Activated CD4-positive, alpha-beta memory T cell treated with anti-CD3 and anti-CD28 coated beads for 36 hours (primary cell): ENCODE measurements at regions of chr12 and their contacts with region 1.

Region 1: DNA sequence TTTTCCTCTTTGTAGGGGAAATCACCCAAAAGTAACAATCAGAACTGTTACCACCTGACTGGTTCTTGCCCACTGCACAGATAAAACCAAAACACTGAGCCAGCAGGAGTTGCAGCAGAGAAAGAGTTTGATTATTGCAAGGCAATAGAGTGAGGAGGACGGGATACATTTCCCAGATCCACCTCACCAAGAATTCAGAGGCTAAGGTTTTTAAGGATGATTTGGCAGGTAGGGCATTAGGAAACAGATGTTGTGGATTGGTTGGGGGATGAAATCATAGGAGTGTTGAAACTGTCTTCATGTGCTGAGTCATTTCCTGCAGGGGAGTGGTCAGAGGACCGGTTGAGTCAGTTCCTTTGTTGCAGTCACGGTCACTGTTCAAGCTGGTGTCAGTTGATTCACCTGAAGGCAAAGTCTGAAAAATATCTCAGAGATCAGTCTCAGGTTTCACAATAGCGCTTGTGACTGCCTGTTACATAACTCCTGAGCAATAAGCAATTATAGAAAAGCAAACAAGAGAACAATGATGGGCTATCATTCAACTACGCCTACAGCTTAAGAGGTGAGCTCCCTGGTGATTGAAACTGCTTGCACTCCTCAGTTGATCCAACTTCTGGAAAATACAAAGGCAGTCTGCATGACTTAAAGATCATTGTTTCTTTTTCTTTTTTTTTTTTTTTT is 20.3 kb upstream of the AMN1 start:
- DNase-seq: peak; percentile 87
- H3K4me3 Mint-ChIP-seq: no peak overlapping the region
- H3K27ac Mint-ChIP-seq: peak overlapping the region; percentile 63
- H3K4me1 Mint-ChIP-seq: peaks cover 57% of the 10 kb centered on the region
- H3K27me3 Mint-ChIP-seq: no peaks in the 10 kb centered on the region

Region 2: DNA sequence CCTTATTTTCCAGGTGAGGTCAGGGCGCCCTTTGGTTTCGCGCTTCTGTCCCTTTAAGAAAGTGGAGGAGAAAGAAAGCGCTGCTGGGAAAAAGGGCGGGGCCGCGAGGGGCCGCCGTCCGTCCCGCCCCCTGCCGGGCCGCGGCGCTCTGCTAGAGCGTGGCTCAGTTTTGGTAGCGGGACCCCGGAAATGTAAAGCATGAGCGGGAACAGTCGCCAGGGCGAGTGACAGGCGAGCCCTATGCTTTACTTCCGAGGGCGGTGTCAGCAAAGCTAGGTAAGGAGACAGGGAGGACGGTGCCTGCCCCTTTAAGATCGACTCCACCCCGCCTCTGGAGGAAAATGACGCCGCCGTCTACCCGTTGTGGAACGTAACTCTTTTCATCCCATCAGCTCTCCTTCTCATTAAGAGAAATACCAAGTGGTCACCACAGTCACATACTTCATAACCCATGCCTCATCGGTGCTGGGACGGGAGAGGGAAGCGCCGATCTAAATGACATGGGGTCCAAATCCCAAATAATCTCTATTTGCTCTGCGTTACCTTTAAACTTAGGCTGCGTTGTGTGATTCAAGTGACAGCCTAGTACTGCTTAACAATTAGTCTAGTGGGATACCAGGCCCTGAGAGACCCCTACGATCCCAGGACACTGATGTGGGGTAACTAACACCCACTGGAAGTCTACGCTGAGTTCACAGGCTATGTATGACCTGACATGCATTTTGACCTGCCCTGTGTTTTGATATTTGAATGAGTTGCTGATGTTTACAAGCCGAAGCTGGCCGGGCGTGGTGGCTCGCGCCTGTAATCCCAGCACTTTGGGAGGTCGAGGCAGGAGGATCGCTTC is 89.9 kb before region 1 on chr12 and contains the start of gene ETFBKMT:
- CTCF ChIA-PET with region 1: interaction called, 3 read pairs
- POLR2A ChIA-PET with region 1: no interaction called
- intact Hi-C with region 1: loop called (anchors 1 kb)
- DNase-seq: peak; percentile 97
- H3K4me3 Mint-ChIP-seq: peak within 1 kb of the TSS; percentile 96
- H3K27ac Mint-ChIP-seq: peak within 1 kb of the TSS; percentile 95
- H3K4me1 Mint-ChIP-seq: peaks cover 7% of the 10 kb centered on the region
- H3K27me3 Mint-ChIP-seq: no peaks in the 10 kb centered on the region
- total RNA-seq, gene ETFBKMT: 1.1 to 1.3 TPM

Region 3: GRCh38 chr12:31722580-31722979 is 26.6 kb before region 1 on chr12:
- CTCF ChIA-PET with region 1: no interaction called
- POLR2A ChIA-PET with region 1: no interaction called
- intact Hi-C with region 1: no loop called
- DNase-seq: no peak
- H3K4me3 Mint-ChIP-seq: no peak overlapping the region
- H3K27ac Mint-ChIP-seq: no peak overlapping the region
- H3K4me1 Mint-ChIP-seq: peaks cover 34% of the 10 kb centered on the region
- H3K27me3 Mint-ChIP-seq: no peaks in the 10 kb centered on the region

Region 4: DNA sequence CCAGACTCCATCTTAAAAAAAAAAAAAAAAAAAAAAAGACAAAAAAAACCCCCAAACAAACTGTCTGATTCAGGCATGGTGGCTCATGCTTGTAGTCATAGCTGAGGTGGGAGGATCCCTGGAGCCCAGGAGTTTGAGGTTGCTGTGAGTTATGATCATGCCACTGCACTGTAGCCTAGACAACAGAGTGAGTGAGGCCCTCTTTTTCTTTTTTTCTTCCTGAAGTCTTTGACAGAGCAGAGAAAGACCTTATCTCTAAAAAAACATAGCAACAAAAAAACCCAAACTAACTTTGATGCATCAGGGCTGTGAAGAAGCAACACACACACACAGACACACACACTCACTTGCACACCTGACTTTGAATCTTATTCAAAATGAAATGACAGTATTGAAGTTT is 12.7 kb before region 1 on chr12:
- CTCF ChIA-PET with region 1: interaction called, 3 read pairs
- POLR2A ChIA-PET with region 1: interaction called, 5 read pairs
- intact Hi-C with region 1: loop called (anchors 1 kb)
- DNase-seq: peak; percentile 84
- H3K4me3 Mint-ChIP-seq: no peak overlapping the region
- H3K27ac Mint-ChIP-seq: peak overlapping the region; percentile 74
- H3K4me1 Mint-ChIP-seq: peaks cover 56% of the 10 kb centered on the region
- H3K27me3 Mint-ChIP-seq: no peaks in the 10 kb centered on the region

Region 5: DNA sequence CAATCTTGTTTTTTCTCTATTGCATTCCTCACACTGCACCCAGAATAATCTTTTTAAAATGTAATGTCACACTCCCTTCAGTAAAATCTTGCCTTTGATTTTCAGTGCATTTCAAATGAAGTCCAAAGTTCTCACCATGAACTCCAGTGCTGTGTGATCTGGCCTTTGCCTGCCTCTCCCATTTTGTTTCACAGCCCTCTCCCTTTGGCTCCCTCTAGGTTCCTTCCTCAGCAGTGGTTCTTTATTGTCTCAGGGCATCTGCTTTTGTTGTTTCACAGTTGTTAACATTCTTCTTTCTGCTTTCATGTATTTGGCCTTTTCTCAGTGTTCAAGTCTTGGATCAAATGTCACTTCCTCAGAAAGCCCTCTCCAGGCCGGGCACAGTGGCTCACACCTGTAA is 64.1 kb after region 1 on chr12:
- CTCF ChIA-PET with region 1: interaction called, 4 read pairs
- POLR2A ChIA-PET with region 1: no interaction called
- intact Hi-C with region 1: loop called (anchors 1 kb)
- DNase-seq: no peak
- H3K4me3 Mint-ChIP-seq: no peak overlapping the region
- H3K27ac Mint-ChIP-seq: no peak overlapping the region
- H3K4me1 Mint-ChIP-seq: peaks cover 18% of the 10 kb centered on the region
- H3K27me3 Mint-ChIP-seq: no peaks in the 10 kb centered on the region

Region 6: GRCh38 chr12:32102234-32102633 is 353.1 kb after region 1 on chr12:
- CTCF ChIA-PET with region 1: no interaction called
- POLR2A ChIA-PET with region 1: no interaction called
- intact Hi-C with region 1: no loop called
- DNase-seq: no peak
- H3K4me3 Mint-ChIP-seq: no peak overlapping the region
- H3K27ac Mint-ChIP-seq: no peak overlapping the region
- H3K4me1 Mint-ChIP-seq: peaks cover 5% of the 10 kb centered on the region
- H3K27me3 Mint-ChIP-seq: no peaks in the 10 kb centered on the region

Region 7: GRCh38 chr12:32257695-32258496 is 508.7 kb after region 1 on chr12:
- CTCF ChIA-PET with region 1: no interaction called
- POLR2A ChIA-PET with region 1: interaction called, 3 read pairs
- intact Hi-C with region 1: loop called (anchors 5 kb)
- DNase-seq: no peak
- H3K4me3 Mint-ChIP-seq: no peak overlapping the region
- H3K27ac Mint-ChIP-seq: no peak overlapping the region
- H3K4me1 Mint-ChIP-seq: peaks cover 11% of the 10 kb centered on the region
- H3K27me3 Mint-ChIP-seq: no peaks in the 10 kb centered on the region